ENCODE measurements at regions of chr18 and their contacts with region 1.

Region 1: DNA sequence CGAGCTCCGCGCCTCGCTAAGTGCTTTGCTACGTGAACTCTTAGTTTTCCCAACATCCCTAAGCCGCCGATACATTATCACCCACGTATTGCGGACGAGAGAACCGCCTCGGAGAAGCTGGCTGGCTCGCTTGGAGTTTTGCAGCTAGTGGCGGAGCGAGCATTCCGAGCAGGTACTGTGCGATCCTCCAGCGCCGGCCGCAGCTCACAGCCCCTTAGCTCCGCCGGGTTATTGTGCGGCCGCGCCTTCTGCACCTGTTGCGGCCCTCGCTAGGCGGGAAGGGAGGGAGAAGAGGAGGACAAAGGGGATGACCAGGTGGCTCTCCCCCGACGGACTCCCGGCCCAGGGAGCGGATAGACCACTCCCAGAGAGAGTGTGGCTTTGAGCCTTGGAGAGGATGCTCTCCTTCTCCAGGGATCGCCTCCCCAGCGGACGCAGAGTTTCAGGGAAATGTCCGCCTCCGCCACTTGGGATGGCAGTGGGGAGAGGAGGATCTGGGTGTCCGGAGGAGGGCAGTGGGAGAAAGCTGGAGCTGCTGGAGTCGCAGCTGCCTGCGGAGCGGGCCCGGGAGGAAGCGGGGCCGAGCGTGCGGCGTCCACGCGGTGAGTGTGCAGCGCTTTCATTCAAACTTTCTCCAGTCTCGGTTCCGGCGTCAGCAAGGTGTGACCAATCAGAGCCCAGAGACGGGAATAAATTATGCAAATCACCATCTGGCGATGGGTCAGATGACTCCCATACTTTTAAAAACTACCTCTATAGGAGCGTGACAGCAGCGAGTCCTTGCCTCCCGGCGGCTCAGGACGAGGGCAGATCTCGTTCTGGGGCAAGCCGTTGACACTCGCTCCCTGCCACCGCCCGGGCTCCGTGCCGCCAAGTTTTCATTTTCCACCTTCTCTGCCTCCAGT is at the start of gene LIPG:
- DNase-seq: peak; percentile 83
- H3K4me3 Mint-ChIP-seq: peak within 1 kb of the TSS; percentile 91
- H3K27ac Mint-ChIP-seq: peak within 1 kb of the TSS; percentile 77
- H3K4me1 Mint-ChIP-seq: peaks cover 16% of the 10 kb centered on the region
- H3K27me3 Mint-ChIP-seq: no peaks in the 10 kb centered on the region
- CTCF ChIP-seq: no peak
- total RNA-seq, gene LIPG: 36.6 and 44.0 TPM in 2 replicates

Region 2: GRCh38 chr18:49510393-49511115 is 51.0 kb before region 1 on chr18:
- CTCF ChIA-PET with region 1: interaction called, 5 read pairs
- intact Hi-C with region 1: loop called (anchors 2 kb)
- DNase-seq: peak; percentile 72
- H3K4me3 Mint-ChIP-seq: no peak overlapping the region
- H3K27ac Mint-ChIP-seq: no peak overlapping the region
- H3K4me1 Mint-ChIP-seq: no peaks in the 10 kb centered on the region
- H3K27me3 Mint-ChIP-seq: peaks cover 25% of the 10 kb centered on the region
- CTCF ChIP-seq: peak; percentile 87

Region 3: DNA sequence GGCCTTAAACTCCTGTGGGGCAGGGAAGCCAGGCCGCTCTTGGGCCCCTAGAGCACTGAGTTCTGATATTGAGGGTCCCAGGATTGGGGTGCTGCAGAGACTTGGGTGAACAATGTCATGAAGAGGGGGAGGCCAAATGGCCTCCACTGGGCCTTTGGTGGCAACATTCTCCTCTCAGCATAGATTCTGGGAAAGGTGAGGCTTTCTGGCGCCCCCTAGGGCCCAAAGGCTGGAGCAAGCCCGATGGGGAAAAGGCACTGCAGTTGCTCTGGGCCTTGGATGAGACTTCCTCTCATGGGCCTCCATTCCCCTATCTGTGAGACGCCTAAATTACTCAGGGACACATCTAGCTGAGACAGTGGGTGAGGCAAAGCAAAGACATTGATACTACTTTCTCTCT is 167.0 kb after region 1 on chr18:
- CTCF ChIA-PET with region 1: interaction called, 3 read pairs
- intact Hi-C with region 1: loop called (anchors 5 kb)
- DNase-seq: peak; percentile 70
- H3K4me3 Mint-ChIP-seq: no peak overlapping the region
- H3K27ac Mint-ChIP-seq: no peak overlapping the region
- H3K4me1 Mint-ChIP-seq: peaks cover 44% of the 10 kb centered on the region
- H3K27me3 Mint-ChIP-seq: no peaks in the 10 kb centered on the region
- CTCF ChIP-seq: no peak

Region 4: DNA sequence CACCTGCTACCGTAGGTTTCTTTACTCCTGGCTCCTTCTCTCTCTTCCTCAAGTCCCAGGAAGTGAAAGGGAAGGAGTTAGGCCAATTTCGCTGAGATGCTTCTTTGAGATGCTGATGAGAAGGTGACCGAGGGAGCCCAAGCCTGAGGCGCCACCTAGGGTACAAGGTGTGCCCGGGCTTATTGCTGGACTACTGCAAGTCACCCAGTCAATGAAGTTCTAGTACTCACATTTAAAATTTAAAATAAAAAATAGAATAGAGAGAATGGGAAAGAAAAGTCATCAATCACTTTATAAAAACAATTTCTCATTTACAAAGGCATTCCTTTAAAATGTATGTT is 206.5 kb after region 1 on chr18:
- CTCF ChIA-PET with region 1: interaction called, 5 read pairs
- intact Hi-C with region 1: loop called (anchors 2 kb)
- DNase-seq: peak; percentile 75
- H3K4me3 Mint-ChIP-seq: no peak overlapping the region
- H3K27ac Mint-ChIP-seq: no peak overlapping the region
- H3K4me1 Mint-ChIP-seq: peaks cover 11% of the 10 kb centered on the region
- H3K27me3 Mint-ChIP-seq: no peaks in the 10 kb centered on the region
- CTCF ChIP-seq: peak; percentile 72

Region 5: DNA sequence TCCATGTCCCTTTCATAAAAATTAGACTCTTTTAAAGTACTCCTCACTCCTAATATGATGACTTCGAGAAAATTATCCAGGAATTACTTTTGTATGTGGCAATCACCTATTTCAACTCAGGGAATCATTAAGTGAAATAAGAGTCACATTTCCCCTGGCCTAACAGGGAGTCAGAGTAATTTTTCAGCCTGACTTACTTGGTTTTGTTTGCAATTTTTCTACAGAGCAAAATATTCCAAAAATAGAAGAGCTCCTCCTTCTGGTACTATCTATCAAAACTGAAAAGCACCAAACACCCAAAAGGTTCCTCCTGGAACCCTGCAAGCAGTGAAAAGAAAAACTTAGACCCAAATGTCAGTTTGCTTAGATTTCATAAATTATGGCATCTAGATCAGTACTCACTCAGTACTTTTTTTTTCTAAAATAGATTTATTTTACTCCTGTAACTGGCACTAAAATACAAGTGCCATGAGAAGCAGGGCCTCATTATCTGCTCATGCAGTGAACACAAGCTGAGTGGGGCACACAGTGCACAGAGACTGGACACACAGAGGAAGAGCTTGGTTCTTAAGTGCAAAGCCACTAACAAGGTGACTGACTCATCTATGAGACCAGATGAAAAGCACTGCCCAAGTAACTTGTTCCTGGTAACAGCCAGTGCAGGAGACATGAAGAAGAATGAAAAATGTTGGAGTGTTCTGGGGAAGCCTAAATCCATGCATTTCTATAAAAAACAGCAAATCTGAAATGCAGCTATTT is 223.1 kb after region 1 on chr18:
- CTCF ChIA-PET with region 1: no interaction called
- intact Hi-C with region 1: loop called (anchors 5 kb)
- DNase-seq: no peak
- H3K4me3 Mint-ChIP-seq: no peak overlapping the region
- H3K27ac Mint-ChIP-seq: no peak overlapping the region
- H3K4me1 Mint-ChIP-seq: peaks cover 13% of the 10 kb centered on the region
- H3K27me3 Mint-ChIP-seq: no peaks in the 10 kb centered on the region
- CTCF ChIP-seq: peak; percentile 25

Region 6: GRCh38 chr18:49858309-49859020 is 296.9 kb after region 1 on chr18:
- CTCF ChIA-PET with region 1: interaction called, 13 read pairs
- intact Hi-C with region 1: loop called (anchors 1 kb)
- DNase-seq: peak; percentile 87
- H3K4me3 Mint-ChIP-seq: peak overlapping the region; percentile 51
- H3K27ac Mint-ChIP-seq: peak overlapping the region; percentile 33
- H3K4me1 Mint-ChIP-seq: peaks cover 40% of the 10 kb centered on the region
- H3K27me3 Mint-ChIP-seq: no peaks in the 10 kb centered on the region
- CTCF ChIP-seq: peak; percentile 94

Region 7: GRCh38 chr18:50388988-50389387 is 827.4 kb after region 1 on chr18:
- CTCF ChIA-PET with region 1: no interaction called
- intact Hi-C with region 1: no loop called
- DNase-seq: no peak
- H3K4me3 Mint-ChIP-seq: no peak overlapping the region
- H3K27ac Mint-ChIP-seq: no peak overlapping the region
- H3K4me1 Mint-ChIP-seq: no peaks in the 10 kb centered on the region
- H3K27me3 Mint-ChIP-seq: no peaks in the 10 kb centered on the region
- CTCF ChIP-seq: no peak